Sciatic nerve (tissue), 2 donors: ENCODE measurements at regions of chr3 and their contacts with region 1.

Region 1: GRCh38 chr3:164267053-164267452 is 811.2 kb downstream of the SI start:
- DNase-seq: no peak
- ATAC-seq: no peak

Region 2: DNA sequence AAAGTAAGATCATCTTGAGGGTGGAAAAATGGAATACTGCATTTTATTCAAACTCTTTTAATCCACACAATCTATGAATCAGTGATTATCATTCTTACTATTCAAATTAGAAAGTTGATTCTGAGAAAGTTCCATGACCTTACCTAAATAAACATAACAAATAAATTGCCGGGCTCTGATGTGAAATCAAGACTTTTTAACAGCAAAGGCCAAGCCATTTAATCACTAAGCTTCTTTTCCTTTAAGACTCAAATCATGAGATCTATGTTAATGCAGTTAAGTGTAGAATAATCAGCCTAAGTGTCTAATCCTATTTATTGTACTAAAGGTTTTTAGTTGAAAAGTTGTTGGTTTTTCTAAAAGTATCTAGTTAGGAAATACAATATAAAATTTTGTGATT is 45.8 kb before region 1 on chr3:
- intact Hi-C with region 1: loop called (anchors 2 kb)
- DNase-seq: no peak
- ATAC-seq: no peak

Region 3: GRCh38 chr3:164390046-164390445 is 123.0 kb after region 1 on chr3:
- intact Hi-C with region 1: no loop called
- DNase-seq: no peak
- ATAC-seq: no peak